Heart right ventricle (tissue), 16 donors: ENCODE measurements at regions of chr20 and their contacts with region 1.

Region 1: DNA sequence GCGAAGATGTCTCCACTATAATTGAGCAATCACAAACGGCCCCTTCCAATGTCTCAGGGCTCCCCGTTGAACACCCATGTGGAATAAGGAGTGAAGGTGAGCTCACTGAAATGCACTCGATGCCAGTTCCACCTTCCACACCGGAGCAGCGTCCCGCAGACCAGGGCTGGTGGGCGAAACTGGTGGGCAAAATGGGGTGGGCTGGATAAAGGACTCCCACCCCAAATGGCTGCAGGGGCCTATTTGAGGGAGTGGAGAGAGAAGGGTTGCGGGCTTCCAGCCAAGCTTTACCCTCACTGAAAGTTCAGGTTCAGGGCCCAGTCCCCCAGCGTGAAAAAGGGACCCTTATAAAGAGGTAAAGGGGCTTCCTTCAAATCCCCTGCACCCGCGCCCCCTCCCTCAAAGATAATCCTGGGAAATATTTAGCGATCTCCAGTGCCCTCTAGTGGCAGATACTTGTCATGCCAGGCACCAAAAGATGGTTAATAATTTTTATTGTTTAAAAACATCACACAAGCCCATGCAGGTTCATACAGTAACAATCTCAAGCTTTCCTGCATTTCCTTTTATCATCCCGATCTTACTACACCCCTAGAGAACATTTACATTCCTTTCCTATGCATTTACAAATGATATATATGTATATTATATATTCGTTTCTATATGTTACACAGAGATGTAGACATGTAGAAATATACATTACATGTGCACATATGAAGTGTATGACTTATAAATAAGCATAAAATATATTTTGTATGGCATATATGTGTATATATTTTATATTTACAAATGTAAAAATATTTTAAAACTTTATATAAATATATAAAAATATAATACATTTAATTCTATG is 58.2 kb upstream of the NKX2-2 start:
- DNase-seq: no peak
- ATAC-seq: no peak
- H3K4me3 ChIP-seq: no peak overlapping the region
- H3K27ac ChIP-seq: no peak overlapping the region
- H3K4me1 ChIP-seq: no peaks in the 10 kb centered on the region
- H3K27me3 ChIP-seq: peaks cover 4 to 59% (median 36%) of the 10 kb centered on the region in 7 donors
- CTCF ChIP-seq: peak; percentile 79 to 87 (median 83)

Region 2: GRCh38 chr20:20837574-20838021 is 734.5 kb before region 1 on chr20:
- intact Hi-C with region 1: loop called in 3 of 10 experiments (anchors 2 to 10 kb)
- DNase-seq: peak; percentile 40 to 41
- ATAC-seq: peak in 4 of 8 donors; percentile 34 to 54 (median 52)
- H3K4me3 ChIP-seq: peak overlapping the region in 9 of 10 donors; percentile 3 to 39 (median 21)
- H3K27ac ChIP-seq: no peak overlapping the region
- H3K4me1 ChIP-seq: peaks cover 0 to 7% (median 4%) of the 10 kb centered on the region in 9 donors
- H3K27me3 ChIP-seq: peaks cover 0 to 48% (median 24%) of the 10 kb centered on the region in 7 donors
- CTCF ChIP-seq: peak; percentile 32 to 82 (median 72)

Region 3: DNA sequence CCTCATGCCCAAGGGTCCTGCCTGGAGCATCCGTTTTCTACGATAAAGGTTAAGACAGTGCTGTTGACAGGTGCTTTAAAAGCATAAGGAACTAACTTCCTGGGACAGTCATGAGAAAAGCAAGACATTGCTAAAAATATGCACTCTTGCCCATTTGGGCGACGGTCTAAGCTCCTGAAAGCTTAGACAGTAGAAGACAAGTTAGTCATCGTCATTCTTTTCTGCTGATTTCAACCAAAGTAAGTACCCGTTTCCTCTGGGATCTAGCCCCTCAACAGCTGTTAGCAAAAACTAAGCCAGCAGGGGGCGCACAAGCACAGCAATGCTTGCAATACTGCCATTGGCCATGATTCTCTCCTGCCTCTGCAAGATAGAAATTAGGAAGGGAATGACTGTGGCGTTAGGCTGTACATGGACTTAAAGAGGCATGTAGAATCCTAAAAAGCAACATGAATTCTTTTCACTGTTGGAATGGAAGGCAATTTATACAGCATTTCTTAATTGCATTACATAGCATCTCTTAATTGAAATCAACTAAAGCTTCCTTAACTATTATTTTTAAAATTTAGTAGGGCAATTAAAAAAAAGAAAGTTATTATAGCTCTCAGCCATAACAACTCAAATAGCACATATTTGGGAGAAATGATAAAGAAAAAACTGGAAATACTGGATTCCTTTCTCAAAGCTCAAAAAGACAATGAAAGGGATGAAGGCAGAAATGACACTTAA is 711.8 kb before region 1 on chr20:
- intact Hi-C with region 1: loop called in 6 of 10 experiments (anchors 5 to 10 kb)
- DNase-seq: peak; percentile 84 to 89
- ATAC-seq: peak; percentile 64 to 93 (median 80)
- H3K4me3 ChIP-seq: no peak overlapping the region
- H3K27ac ChIP-seq: no peak overlapping the region
- H3K4me1 ChIP-seq: peaks cover 0 to 2% (median 0%) of the 10 kb centered on the region in 9 donors
- H3K27me3 ChIP-seq: peaks cover 0 to 44% (median 31%) of the 10 kb centered on the region in 7 donors
- CTCF ChIP-seq: peak; percentile 74 to 96 (median 94)

Region 4: DNA sequence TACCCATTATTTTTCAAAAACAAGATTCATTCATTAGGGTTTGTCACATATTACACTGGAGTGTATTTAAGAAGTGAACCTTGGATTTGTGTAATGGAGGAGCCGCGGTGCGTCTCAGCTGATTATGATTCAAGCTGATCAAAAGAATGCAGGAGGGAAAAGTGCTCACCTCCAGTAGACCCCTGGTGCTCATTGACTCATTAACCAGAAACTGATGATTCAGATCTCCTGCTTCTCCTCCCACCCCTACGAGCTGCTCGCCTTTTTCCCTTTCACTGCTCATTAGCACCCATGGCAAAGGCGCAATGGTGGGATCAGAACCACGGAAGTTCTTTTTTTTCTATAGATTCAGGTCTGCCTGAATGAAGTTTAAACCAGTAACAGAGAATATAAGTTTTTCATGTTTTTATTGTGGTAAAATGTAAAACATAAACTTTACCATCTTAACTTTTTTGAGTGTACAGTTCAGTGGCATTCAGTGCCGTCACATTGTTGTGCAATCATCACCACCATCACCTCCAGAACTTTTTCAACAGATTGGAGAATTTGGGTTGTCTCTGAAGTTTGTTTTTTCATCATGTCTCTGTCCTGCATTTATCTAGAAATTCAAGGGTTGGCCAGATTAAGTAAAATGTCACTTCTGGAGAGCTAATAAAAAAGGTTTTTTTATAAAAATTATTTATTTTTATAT is 567.5 kb before region 1 on chr20:
- intact Hi-C with region 1: no loop called
- DNase-seq: no peak
- ATAC-seq: no peak
- H3K4me3 ChIP-seq: no peak overlapping the region
- H3K27ac ChIP-seq: no peak overlapping the region
- H3K4me1 ChIP-seq: no peaks in the 10 kb centered on the region
- H3K27me3 ChIP-seq: peaks cover 0 to 23% (median 3%) of the 10 kb centered on the region in 7 donors
- CTCF ChIP-seq: no peak

Region 5: DNA sequence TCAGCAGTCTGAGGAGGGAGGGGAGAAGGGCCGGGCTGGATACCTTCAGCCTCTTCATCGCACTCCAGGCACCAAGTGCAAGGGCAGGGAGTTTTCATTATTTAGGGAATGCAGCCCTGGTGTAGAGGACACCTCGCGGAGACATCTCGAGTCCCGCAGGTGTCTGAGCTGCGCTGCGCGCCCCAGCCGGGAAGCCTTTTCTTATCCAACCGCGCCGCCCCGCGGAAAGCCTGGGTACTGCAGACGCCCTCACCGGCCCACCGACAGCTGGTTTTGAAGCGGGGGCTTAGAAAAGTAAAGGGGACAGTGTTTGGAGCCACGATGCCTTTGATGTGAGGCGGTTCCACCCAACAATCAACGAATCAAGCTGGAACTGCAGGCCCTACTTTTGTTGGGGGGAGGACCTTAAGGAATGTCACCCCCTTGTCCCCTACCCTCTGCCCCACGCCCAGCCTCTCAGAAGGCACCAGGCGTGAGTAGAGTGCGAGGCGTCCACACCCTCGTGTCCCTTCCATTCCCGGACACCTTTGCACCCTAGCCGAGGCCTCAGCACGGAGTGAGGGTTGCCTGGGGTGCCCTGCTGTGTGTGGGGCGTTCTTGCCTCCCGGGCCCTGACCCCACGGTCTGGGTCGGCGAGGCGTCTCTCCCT is 66.8 kb before region 1 on chr20:
- intact Hi-C with region 1: loop called in 1 of 10 experiments (anchors 10 kb)
- DNase-seq: peak; percentile 54 to 66
- ATAC-seq: peak; percentile 54 to 77 (median 66)
- H3K4me3 ChIP-seq: peak overlapping the region in 9 of 10 donors; percentile 18 to 51 (median 40)
- H3K27ac ChIP-seq: no peak overlapping the region
- H3K4me1 ChIP-seq: peaks cover 4 to 36% (median 23%) of the 10 kb centered on the region in 9 donors
- H3K27me3 ChIP-seq: peaks cover 36 to 100% (median 96%) of the 10 kb centered on the region in 7 donors
- CTCF ChIP-seq: peak; percentile 86 to 98 (median 94)